ENCODE measurements at regions of chr19 and their contacts with region 1.

Region 1: DNA sequence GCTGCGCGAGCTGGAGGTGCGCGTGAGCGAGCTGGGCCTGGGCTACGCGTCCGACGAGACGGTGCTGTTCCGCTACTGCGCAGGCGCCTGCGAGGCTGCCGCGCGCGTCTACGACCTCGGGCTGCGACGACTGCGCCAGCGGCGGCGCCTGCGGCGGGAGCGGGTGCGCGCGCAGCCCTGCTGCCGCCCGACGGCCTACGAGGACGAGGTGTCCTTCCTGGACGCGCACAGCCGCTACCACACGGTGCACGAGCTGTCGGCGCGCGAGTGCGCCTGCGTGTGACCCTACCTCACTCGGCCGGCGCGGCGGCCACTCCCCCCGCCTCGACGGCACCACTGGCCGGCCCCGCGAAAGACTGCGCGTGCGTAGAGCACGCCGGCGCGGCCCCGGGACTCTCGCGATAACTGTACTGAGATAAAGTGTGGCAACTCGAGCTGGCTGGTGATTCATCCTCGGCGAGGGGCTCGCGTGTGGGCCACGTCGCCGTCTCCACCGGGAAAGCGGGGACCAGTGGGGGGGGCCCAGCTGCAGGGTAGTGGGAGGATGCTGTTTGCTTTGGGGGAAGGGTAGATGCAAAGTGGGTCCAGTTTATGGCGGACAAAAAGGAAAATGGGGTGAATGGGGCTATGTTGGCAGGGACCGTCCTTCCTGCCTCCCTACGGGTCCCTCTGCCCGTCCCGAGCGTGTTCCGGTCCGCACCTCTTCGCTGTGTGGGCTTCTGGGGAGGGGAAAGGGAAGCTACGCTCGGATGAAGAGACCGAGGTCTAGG is 11.4 kb downstream of the FUT6 start:
- DNase-seq: peak; percentile 96
- H3K4me3 Mint-ChIP-seq: peak overlapping the region; percentile 99
- H3K27ac Mint-ChIP-seq: peak overlapping the region; percentile 96
- H3K4me1 Mint-ChIP-seq: peaks cover 9% of the 10 kb centered on the region
- H3K27me3 Mint-ChIP-seq: no peaks in the 10 kb centered on the region

Region 2: GRCh38 chr19:5387472-5387871 is 440.6 kb before region 1 on chr19:
- CTCF ChIA-PET with region 1: no interaction called
- intact Hi-C with region 1: no loop called
- DNase-seq: no peak
- H3K4me3 Mint-ChIP-seq: no peak overlapping the region
- H3K27ac Mint-ChIP-seq: no peak overlapping the region
- H3K4me1 Mint-ChIP-seq: no peaks in the 10 kb centered on the region
- H3K27me3 Mint-ChIP-seq: peaks cover 27% of the 10 kb centered on the region

Region 3: GRCh38 chr19:5492635-5493409 is 335.3 kb before region 1 on chr19:
- CTCF ChIA-PET with region 1: no interaction called
- intact Hi-C with region 1: no loop called
- DNase-seq: no peak
- H3K4me3 Mint-ChIP-seq: no peak overlapping the region
- H3K27ac Mint-ChIP-seq: no peak overlapping the region
- H3K4me1 Mint-ChIP-seq: peaks cover 2% of the 10 kb centered on the region
- H3K27me3 Mint-ChIP-seq: peaks cover 49% of the 10 kb centered on the region

Region 4: GRCh38 chr19:5803752-5804515 is 24.1 kb before region 1 on chr19:
- CTCF ChIA-PET with region 1: interaction called, 32 read pairs
- intact Hi-C with region 1: loop called (anchors 1 kb)
- DNase-seq: peak; percentile 96
- H3K4me3 Mint-ChIP-seq: peak overlapping the region; percentile 70
- H3K27ac Mint-ChIP-seq: no peak overlapping the region
- H3K4me1 Mint-ChIP-seq: peaks cover 25% of the 10 kb centered on the region
- H3K27me3 Mint-ChIP-seq: peaks cover 19% of the 10 kb centered on the region

Region 5: GRCh38 chr19:5953680-5954213 is 125.7 kb after region 1 on chr19:
- CTCF ChIA-PET with region 1: no interaction called
- intact Hi-C with region 1: loop called (anchors 5 kb)
- DNase-seq: peak; percentile 63
- H3K4me3 Mint-ChIP-seq: peak overlapping the region; percentile 36
- H3K27ac Mint-ChIP-seq: peak overlapping the region; percentile 87
- H3K4me1 Mint-ChIP-seq: peaks cover 92% of the 10 kb centered on the region
- H3K27me3 Mint-ChIP-seq: no peaks in the 10 kb centered on the region

Region 6: GRCh38 chr19:6767357-6768235 is 939.5 kb after region 1 on chr19 and contains the start of gene SH2D3A:
- CTCF ChIA-PET with region 1: no interaction called
- intact Hi-C with region 1: loop called (anchors 5 kb)
- DNase-seq: peak; percentile 98
- H3K4me3 Mint-ChIP-seq: peak within 1 kb of the TSS; percentile 94
- H3K27ac Mint-ChIP-seq: peak within 1 kb of the TSS; percentile 91
- H3K4me1 Mint-ChIP-seq: peaks cover 39% of the 10 kb centered on the region
- H3K27me3 Mint-ChIP-seq: no peaks in the 10 kb centered on the region
- total RNA-seq, gene SH2D3A: 23.2 to 24.9 TPM

Measured in activated naive CD4-positive, alpha-beta T cell treated with anti-CD3 and anti-CD28 coated beads for 36 hours (primary cell).